ENCODE measurements at regions of chr17 and their contacts with region 1.

Region 1: DNA sequence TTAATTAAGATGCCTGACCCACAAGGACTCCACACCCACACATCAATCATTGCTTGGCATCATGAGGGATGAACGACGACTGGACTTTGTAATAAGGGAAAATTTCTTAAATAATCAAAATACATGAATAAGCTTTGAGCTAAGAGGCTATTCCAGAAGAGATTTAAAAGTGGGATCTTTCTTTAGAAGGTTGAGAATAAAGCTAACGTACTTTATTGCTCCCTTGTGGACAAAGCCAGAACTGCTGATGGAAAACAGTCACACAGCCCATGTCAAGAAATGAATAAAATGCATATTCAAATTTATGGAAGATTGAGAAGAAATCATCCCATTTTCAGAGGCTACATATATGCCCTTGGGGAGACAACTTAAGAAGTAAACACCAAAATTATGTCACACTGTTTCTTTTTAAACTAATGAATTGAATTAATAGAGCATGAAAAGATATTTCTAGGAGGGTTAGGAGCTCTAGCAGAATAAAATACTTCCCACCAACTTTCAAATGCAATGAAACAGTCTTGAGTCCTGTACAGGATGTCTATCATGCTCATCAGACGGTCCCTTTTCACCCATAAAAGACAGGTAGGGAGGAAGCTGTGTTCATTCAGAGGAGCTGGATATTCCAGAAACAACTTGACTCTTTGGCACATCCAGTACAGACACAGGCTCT is 60.2 kb upstream of the PHOSPHO1 start:
- DNase-seq: no peak
- H3K4me3 ChIP-seq: no peak overlapping the region
- H3K27ac ChIP-seq: no peak overlapping the region
- H3K4me1 ChIP-seq: no peaks in the 10 kb centered on the region
- H3K27me3 ChIP-seq: no peaks in the 10 kb centered on the region
- CTCF ChIP-seq: peak; percentile 39 to 67 (median 62)
- EP300 ChIP-seq: no peak
- POLR2A ChIP-seq: no peak

Region 2: DNA sequence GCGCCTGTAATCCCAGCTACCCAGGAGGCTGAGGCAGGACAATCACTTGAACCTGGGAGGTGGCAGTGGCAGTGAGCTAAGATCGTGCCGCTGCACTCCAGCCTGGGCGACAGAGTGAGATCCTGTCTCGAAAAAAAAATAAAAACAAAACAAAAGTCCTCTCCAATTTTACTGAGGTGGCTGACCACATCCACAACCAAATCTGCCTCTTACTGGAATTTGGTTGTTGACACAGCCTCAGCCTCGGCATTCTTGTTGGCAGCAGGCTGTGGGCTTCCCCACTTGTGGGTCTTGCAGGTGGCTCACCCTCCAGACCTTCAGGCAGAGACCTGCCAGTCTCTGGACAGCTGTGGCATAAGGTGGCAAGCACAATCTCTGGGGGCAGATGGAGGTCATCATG is 142.7 kb before region 1 on chr17:
- intact Hi-C with region 1: no loop called
- DNase-seq: no peak
- H3K4me3 ChIP-seq: no peak overlapping the region
- H3K27ac ChIP-seq: no peak overlapping the region
- H3K4me1 ChIP-seq: no peaks in the 10 kb centered on the region
- H3K27me3 ChIP-seq: peaks cover 0 to 63% (median 3%) of the 10 kb centered on the region in 4 donors
- CTCF ChIP-seq: no peak
- EP300 ChIP-seq: no peak
- POLR2A ChIP-seq: no peak

Region 3: DNA sequence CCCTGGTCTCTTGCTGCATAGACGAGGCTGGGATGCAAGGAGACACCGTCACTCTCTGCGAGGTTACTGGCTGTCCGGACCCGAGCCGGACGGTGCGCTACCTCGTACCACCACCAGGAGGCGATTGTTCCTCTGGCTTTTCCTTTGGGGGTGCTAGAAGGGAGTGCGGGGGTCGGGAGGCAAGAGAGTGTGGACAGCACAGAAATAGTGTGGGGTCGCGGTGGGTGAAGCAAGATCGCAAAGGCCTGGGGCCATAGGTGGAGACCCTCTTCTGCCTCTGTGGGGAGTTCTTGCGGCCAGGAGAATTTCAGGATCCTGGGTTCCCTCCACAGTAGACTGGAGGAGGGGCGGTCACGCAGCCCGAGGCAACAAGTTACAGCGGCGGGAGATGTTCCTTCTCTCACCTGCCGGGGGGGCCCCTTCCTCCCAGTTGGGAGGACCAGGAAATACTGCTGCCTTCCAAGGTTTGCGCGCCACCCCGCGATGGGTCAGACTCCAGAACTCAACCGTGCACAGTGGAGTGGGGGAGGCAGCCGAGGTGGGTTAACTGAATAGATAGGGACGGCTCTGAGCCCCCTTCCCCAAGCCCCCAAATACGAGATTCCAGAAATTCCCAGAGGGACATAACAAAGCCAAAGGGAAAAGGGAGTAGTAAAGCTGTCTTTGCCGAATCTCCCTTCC is 67.2 kb before region 1 on chr17:
- intact Hi-C with region 1: loop called (anchors 5 kb)
- DNase-seq: no peak
- H3K4me3 ChIP-seq: peak overlapping the region; percentile 26 to 43 (median 30)
- H3K27ac ChIP-seq: no peak overlapping the region
- H3K4me1 ChIP-seq: peaks cover 18 to 32% (median 25%) of the 10 kb centered on the region in 4 donors
- H3K27me3 ChIP-seq: peaks cover 0 to 91% (median 26%) of the 10 kb centered on the region in 4 donors
- CTCF ChIP-seq: peak; percentile 62 to 83 (median 69)
- EP300 ChIP-seq: no peak
- POLR2A ChIP-seq: no peak

Measured in esophagus muscularis mucosa (tissue), 4 donors.